Activated naive CD8-positive, alpha-beta T cell treated with anti-CD3 and anti-CD28 coated beads, Interleukin-2, amount 10 ng/mL, durations not matched to agents 7 days and 5 days (primary cell): ENCODE measurements at regions of chr10 and their contacts with region 1.

Region 1: GRCh38 chr10:72215652-72216549 is at the starts of genes ANAPC16 and ASCC1:
- DNase-seq: peak; percentile 99
- ATAC-seq: peak; percentile 87
- H3K4me3 Mint-ChIP-seq: peak within 1 kb of the TSS; percentile 93
- H3K27ac Mint-ChIP-seq: peak within 1 kb of the TSS; percentile 93
- H3K4me1 Mint-ChIP-seq: peaks cover 40% of the 10 kb centered on the region
- H3K27me3 Mint-ChIP-seq: no peaks in the 10 kb centered on the region
- total RNA-seq, gene ANAPC16: 89.2 to 89.8 TPM
- total RNA-seq, gene ASCC1: 28.5 to 34.4 TPM

Region 2: GRCh38 chr10:71995887-71996575 is 219.9 kb before region 1 on chr10:
- POLR2A ChIA-PET with region 1: no interaction called
- DNase-seq: no peak
- ATAC-seq: no peak
- H3K4me3 Mint-ChIP-seq: no peak overlapping the region
- H3K27ac Mint-ChIP-seq: no peak overlapping the region
- H3K4me1 Mint-ChIP-seq: no peaks in the 10 kb centered on the region
- H3K27me3 Mint-ChIP-seq: peaks cover 6% of the 10 kb centered on the region

Region 3: DNA sequence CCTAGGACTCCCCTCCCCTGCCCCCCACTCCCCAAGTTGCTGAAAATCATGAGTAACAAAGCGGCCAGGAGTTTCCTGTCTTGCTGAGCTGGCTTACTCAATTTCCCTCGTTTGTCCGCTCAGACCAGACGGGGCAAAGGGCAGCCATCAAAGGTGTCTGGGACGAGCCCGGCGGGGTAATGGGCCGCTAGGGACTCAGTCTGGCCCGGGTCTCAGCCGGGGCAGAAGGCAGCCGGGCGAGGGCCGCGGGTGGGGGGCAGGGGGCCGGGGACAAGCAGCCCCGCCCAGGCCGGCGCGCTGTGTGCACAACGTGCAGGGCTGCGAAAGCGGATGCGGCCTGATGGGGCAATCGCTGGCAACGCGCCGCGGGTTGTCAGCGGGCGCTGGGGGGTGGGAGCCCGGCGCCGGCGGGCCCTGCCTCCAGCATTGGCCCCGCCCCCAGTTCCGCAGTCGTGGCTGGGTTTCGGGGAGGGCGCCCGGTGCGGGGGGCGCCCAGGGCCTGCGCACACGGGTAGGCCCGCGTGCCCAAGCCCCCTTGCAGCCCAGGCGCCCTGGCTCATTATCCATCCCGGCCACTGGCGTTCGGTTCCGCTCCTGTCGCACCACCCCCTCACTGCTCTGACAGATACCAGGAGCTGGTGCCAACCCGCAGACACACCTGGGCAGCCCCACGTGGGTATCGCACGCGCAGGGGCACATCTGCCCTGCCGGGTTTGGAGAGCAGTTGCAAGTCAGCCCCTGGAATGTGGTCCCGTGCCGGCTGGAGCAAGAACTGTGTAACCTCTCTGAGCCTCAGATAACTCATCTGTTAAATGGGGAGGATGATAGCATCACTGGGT is 103.7 kb after region 1 on chr10:
- POLR2A ChIA-PET with region 1: interaction called, 16 read pairs
- DNase-seq: peak; percentile 94
- ATAC-seq: peak; percentile 72
- H3K4me3 Mint-ChIP-seq: peak overlapping the region; percentile 84
- H3K27ac Mint-ChIP-seq: peak overlapping the region; percentile 99
- H3K4me1 Mint-ChIP-seq: peaks cover 69% of the 10 kb centered on the region
- H3K27me3 Mint-ChIP-seq: no peaks in the 10 kb centered on the region

Region 4: GRCh38 chr10:72331601-72332422 is 115.9 kb after region 1 on chr10:
- POLR2A ChIA-PET with region 1: interaction called, 21 read pairs
- DNase-seq: peak; percentile 89
- ATAC-seq: peak; percentile 61
- H3K4me3 Mint-ChIP-seq: peak overlapping the region; percentile 91
- H3K27ac Mint-ChIP-seq: peak overlapping the region; percentile 100
- H3K4me1 Mint-ChIP-seq: peaks cover 73% of the 10 kb centered on the region
- H3K27me3 Mint-ChIP-seq: no peaks in the 10 kb centered on the region